Mammary epithelial cell (primary cell): ENCODE measurements at regions of chr22 and their contacts with region 1.

Region 1: DNA sequence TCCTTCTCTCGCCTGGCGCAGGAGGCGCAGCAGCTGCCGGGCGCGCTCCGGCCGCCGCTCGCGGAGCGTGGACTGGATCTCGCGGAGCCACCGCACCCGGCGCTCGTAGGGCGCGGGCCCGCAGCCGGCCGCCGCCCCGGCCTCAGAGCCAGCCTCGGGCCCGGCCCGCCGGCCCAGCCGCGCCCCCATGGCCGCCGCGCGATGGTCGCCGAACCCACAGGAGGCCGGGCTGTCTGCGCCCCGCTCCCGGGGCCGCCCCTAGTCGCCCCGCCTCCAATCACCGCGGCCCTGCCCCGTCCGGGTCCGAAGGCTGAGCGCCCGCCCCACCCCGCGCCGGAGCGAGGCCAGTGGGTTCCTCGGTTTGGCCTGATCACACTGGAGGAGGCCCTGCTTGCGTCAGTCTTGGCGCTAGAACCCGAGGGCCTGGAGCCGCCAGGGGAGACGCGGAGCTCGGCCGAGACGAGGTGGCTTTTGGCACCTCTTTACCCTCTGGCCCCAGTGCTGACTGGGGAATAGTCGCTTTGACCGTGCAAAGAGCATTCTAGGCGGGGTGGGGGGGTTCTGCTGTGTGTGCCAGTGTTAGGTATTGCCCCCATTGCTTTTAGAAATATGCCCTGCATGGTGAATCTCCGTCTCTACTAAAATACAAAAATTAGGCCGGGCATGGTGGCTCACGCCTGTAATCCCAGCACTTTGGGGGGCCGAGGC is at the start of gene LRRC75B:
- DNase-seq: peak; percentile 79
- H3K4me3 ChIP-seq: peak within 1 kb of the TSS; percentile 60 to 67 (median 66)
- H3K27ac ChIP-seq: peak within 1 kb of the TSS; percentile 36
- H3K4me1 ChIP-seq: peaks cover 19% of the 10 kb centered on the region
- H3K27me3 ChIP-seq: no peaks in the 10 kb centered on the region
- CTCF ChIP-seq: no peak
- total RNA-seq, gene LRRC75B: 11.5 to 17.3 TPM

Region 2: GRCh38 chr22:24555157-24556039 is 37.6 kb before region 1 on chr22 and contains the start of gene SNRPD3:
- CTCF ChIA-PET with region 1: no interaction called
- dilution Hi-C with region 1: no loop called
- in situ Hi-C with region 1: no loop called
- intact Hi-C with region 1: loop called (anchors 5 kb)
- DNase-seq: peak; percentile 98
- H3K4me3 ChIP-seq: peak within 1 kb of the TSS; percentile 87 to 97 (median 94)
- H3K27ac ChIP-seq: peak within 1 kb of the TSS; percentile 90
- H3K4me1 ChIP-seq: peaks cover 24% of the 10 kb centered on the region
- H3K27me3 ChIP-seq: no peaks in the 10 kb centered on the region
- CTCF ChIP-seq: peak in 1 of 2 donors; percentile 41
- total RNA-seq, gene SNRPD3: 74.8 to 99.7 TPM

Region 3: DNA sequence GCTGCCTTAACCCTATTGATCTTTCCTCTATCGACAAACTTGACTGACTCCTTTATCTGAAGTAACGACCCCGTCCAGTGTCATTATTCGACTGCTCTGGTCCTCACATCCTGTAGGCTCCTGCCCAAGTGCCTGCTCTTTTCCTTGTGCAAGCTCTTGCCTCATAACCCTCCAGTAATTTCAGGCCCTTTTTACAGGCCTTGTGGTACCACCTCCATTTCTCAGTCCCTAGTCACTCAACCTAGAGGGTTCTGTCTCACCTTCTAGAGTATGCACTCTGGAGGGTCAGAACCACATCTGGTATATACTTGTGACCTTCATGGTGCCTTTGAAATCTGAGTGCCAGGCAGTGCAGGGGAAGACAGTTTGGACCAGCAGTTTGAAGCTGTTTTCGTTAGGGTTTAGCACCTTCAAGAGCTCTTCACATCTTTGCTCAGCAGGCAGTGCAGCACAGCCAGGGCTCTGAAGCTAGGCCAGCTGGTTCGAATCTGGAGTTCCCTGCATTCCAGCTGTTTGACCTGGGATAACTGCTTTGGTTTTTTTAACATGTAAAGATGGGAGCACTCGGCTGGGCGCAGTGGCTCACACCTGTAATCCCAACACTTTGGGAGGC is 26.0 kb before region 1 on chr22:
- CTCF ChIA-PET with region 1: no interaction called
- dilution Hi-C with region 1: no loop called
- in situ Hi-C with region 1: no loop called
- intact Hi-C with region 1: no loop called
- DNase-seq: no peak
- H3K4me3 ChIP-seq: no peak overlapping the region
- H3K27ac ChIP-seq: no peak overlapping the region
- H3K4me1 ChIP-seq: no peaks in the 10 kb centered on the region
- H3K27me3 ChIP-seq: no peaks in the 10 kb centered on the region
- CTCF ChIP-seq: no peak